Caco-2 (cell line): ENCODE measurements at regions of chr9 and their contacts with region 1.

Region 1: GRCh38 chr9:33225319-33226149 is 14.4 kb upstream of the SPINK4 start:
- DNase-seq: peak; percentile 56 to 69
- H3K4me3 ChIP-seq: no peak overlapping the region
- H3K4me3 Mint-ChIP-seq: no peak overlapping the region
- H3K27ac Mint-ChIP-seq: no peak overlapping the region
- H3K4me1 ChIP-seq: peaks cover 14% of the 10 kb centered on the region
- H3K4me1 Mint-ChIP-seq: peaks cover 27% of the 10 kb centered on the region
- H3K27me3 ChIP-seq: no peaks in the 10 kb centered on the region
- H3K27me3 Mint-ChIP-seq: no peaks in the 10 kb centered on the region
- CTCF ChIP-seq: peak; percentile 62 to 73

Region 2: GRCh38 chr9:32954642-32955041 is 270.9 kb before region 1 on chr9:
- CTCF ChIA-PET with region 1: no interaction called
- POLR2A ChIA-PET with region 1: no interaction called
- intact Hi-C with region 1: no loop called
- DNase-seq: no peak
- H3K4me3 ChIP-seq: no peak overlapping the region
- H3K4me3 Mint-ChIP-seq: no peak overlapping the region
- H3K27ac Mint-ChIP-seq: no peak overlapping the region
- H3K4me1 ChIP-seq: no peaks in the 10 kb centered on the region
- H3K4me1 Mint-ChIP-seq: no peaks in the 10 kb centered on the region
- H3K27me3 ChIP-seq: no peaks in the 10 kb centered on the region
- H3K27me3 Mint-ChIP-seq: no peaks in the 10 kb centered on the region
- CTCF ChIP-seq: no peak

Region 3: DNA sequence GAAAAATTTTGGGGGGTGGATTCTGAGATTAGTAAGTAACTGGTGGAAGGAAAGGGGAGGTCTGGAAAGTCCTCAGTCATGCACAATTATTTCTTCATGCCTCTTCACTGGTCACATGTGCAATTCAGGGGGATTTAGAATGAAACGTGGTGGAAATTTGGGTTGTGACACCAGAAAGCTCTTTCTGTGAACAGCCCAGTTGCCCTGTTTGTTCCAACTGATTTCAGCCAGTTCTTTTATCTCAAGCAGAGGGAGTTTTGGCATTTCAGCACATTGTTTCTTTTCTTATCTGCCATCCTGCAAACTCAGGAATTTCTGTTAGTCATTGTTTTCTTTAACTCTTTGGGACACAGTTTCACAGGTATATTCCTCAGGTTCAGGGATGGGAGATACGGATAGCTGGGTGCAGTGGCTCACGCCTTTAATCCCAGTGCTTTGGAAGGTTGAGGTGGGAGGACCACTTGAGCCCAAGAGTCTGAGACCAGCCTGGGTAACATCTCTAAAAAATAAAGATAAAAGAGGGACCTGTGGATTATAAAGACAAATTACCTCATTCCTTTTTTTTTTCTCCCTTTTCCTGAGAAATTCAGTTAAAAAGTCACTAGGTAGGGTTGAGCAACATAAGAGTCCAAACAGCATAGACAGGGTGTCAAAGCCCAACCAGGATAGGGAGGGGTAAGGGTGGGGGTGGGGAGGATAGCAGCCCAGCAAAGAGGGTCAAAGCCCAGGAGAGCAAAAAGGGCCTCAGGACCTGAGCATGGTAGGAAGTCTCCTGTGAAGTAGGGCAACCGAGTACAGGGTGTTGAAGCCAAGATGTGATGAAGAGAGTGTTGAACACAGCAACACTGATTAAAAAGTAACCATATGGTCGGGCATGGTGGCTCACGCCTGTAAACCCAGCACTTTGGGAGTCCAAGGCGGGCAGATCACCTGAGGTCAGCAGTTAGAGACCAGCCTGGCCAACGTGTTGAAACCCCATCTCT is 53.0 kb before region 1 on chr9:
- CTCF ChIA-PET with region 1: interaction called, 4 read pairs
- POLR2A ChIA-PET with region 1: no interaction called
- intact Hi-C with region 1: loop called (anchors 2 kb)
- DNase-seq: peak; percentile 72 to 82
- H3K4me3 ChIP-seq: no peak overlapping the region
- H3K4me3 Mint-ChIP-seq: peak overlapping the region; percentile 51
- H3K27ac Mint-ChIP-seq: peak overlapping the region; percentile 95
- H3K4me1 ChIP-seq: peaks cover 50% of the 10 kb centered on the region
- H3K4me1 Mint-ChIP-seq: peaks cover 49% of the 10 kb centered on the region
- H3K27me3 ChIP-seq: no peaks in the 10 kb centered on the region
- H3K27me3 Mint-ChIP-seq: no peaks in the 10 kb centered on the region
- CTCF ChIP-seq: no peak

Region 4: GRCh38 chr9:33264473-33265177 is 39.1 kb after region 1 on chr9 and contains the starts of genes BAG1 and CHMP5:
- CTCF ChIA-PET with region 1: no interaction called
- POLR2A ChIA-PET with region 1: no interaction called
- intact Hi-C with region 1: loop called (anchors 1 kb)
- DNase-seq: peak; percentile 99
- H3K4me3 ChIP-seq: peak within 1 kb of the TSS; percentile 100
- H3K4me3 Mint-ChIP-seq: peak within 1 kb of the TSS; percentile 87
- H3K27ac Mint-ChIP-seq: peak within 1 kb of the TSS; percentile 87
- H3K4me1 ChIP-seq: no peaks in the 10 kb centered on the region
- H3K4me1 Mint-ChIP-seq: peaks cover 16% of the 10 kb centered on the region
- H3K27me3 ChIP-seq: no peaks in the 10 kb centered on the region
- H3K27me3 Mint-ChIP-seq: no peaks in the 10 kb centered on the region
- CTCF ChIP-seq: peak in 1 of 2 experiments; percentile 25
- total RNA-seq, gene BAG1: 51.2 and 62.1 TPM in 2 replicates
- total RNA-seq, gene CHMP5: 52.5 and 58.3 TPM in 2 replicates

Region 5: GRCh38 chr9:33290247-33291030 is 64.9 kb after region 1 on chr9 and contains the start of gene NFX1:
- CTCF ChIA-PET with region 1: interaction called, 4 read pairs
- POLR2A ChIA-PET with region 1: no interaction called
- intact Hi-C with region 1: loop called (anchors 1 kb)
- DNase-seq: peak; percentile 96 to 97
- H3K4me3 ChIP-seq: peak within 1 kb of the TSS; percentile 84
- H3K4me3 Mint-ChIP-seq: peak within 1 kb of the TSS; percentile 96
- H3K27ac Mint-ChIP-seq: peak within 1 kb of the TSS; percentile 99
- H3K4me1 ChIP-seq: peaks cover 17% of the 10 kb centered on the region; the same call in 1 of the 2 replicates
- H3K4me1 Mint-ChIP-seq: peaks cover 12% of the 10 kb centered on the region
- H3K27me3 ChIP-seq: no peaks in the 10 kb centered on the region
- H3K27me3 Mint-ChIP-seq: no peaks in the 10 kb centered on the region
- CTCF ChIP-seq: no peak
- total RNA-seq, gene NFX1: 32.6 TPM in 2 replicates

Region 6: GRCh38 chr9:33466565-33467495 is 241.3 kb after region 1 on chr9:
- CTCF ChIA-PET with region 1: no interaction called
- POLR2A ChIA-PET with region 1: no interaction called
- intact Hi-C with region 1: loop called (anchors 1 kb)
- DNase-seq: peak; percentile 67 to 84
- H3K4me3 ChIP-seq: no peak overlapping the region
- H3K4me3 Mint-ChIP-seq: no peak overlapping the region
- H3K27ac Mint-ChIP-seq: no peak overlapping the region
- H3K4me1 ChIP-seq: peaks cover under 1% of the 10 kb centered on the region; the same call in 1 of the 2 replicates
- H3K4me1 Mint-ChIP-seq: peaks cover 7% of the 10 kb centered on the region
- H3K27me3 ChIP-seq: no peaks in the 10 kb centered on the region
- H3K27me3 Mint-ChIP-seq: no peaks in the 10 kb centered on the region
- CTCF ChIP-seq: peak; percentile 96 to 97

Region 7: DNA sequence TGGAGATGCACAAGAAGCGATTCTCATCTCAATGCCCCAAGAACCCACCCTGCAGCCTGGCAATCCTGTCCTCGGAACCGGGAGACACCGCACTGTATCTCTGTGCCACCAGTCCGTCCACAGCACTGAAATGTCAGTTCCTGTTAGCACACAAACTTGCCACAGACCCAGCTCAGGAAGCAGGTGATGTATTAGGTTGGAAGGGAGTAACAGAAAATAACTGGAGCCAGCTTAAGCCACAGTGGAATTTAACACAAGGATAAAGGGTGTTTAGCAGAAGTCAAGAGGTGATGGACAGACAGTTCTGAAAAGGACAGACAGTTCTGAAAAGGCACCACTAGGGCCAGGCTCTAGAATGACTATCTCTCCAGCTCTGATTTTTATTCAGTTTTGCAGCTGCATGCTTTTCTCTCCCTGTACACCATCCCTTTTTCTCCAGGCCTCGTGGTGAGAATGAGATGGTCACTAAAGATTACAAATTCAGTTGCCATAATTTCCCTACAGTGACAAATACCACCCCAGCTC is 412.9 kb after region 1 on chr9:
- CTCF ChIA-PET with region 1: no interaction called
- POLR2A ChIA-PET with region 1: no interaction called
- intact Hi-C with region 1: no loop called
- DNase-seq: no peak
- H3K4me3 ChIP-seq: no peak overlapping the region
- H3K4me3 Mint-ChIP-seq: no peak overlapping the region
- H3K27ac Mint-ChIP-seq: no peak overlapping the region
- H3K4me1 ChIP-seq: no peaks in the 10 kb centered on the region
- H3K4me1 Mint-ChIP-seq: no peaks in the 10 kb centered on the region
- H3K27me3 ChIP-seq: no peaks in the 10 kb centered on the region
- H3K27me3 Mint-ChIP-seq: peaks cover 29% of the 10 kb centered on the region
- CTCF ChIP-seq: no peak